GM23248 (cell line): ENCODE measurements at regions of chr5 and their contacts with region 1.

Region 1: DNA sequence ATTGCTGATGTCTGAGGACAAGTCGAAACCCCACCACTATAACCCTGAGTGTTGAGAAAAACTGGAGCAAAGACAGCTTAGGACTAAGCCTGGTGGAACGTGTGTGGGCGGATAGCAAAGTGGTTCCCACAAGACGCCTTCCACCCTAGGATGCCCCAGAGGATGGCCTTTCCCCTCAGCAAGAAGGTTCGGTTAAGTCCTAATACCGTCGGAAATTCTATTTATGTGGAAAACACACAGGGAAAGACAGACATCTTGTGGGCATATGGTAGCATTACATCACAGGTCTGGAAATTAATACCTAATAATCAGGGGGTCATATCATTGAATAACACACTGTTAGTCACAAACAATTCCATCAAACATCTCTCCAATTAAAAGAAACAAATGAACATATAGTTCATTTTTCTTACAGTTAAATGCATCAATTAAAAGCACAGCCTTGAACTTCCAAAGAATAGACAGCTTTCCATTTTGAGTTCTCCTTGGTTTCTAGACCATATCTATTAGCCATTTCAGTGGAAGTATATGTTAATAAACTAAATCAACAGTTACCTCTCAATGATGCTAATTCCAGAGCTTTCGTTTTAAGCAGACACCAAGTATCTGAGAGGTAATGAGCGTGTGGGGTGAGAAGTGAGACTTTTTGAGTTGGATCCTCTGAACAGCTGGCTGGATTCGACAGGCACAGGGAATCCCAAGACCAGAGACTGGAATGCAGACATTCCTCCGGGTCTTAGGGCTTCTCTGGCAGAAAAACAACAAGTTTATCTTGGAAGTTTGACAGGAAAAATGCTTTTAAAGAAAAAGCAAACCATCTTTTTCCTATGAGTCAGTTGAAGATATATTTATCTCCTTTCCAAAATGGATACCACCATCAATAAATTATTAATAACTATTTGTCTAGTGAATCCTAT is 2.9 kb upstream of the ICE1 start:
- DNase-seq: peak; percentile 92
- H3K4me3 ChIP-seq: peak overlapping the region; percentile 24; the same call in 1 of the 2 replicates
- H3K27ac ChIP-seq: peak overlapping the region; percentile 25; the same call in 1 of the 2 replicates
- H3K4me1 ChIP-seq: peaks cover 30% of the 10 kb centered on the region
- H3K27me3 ChIP-seq: no peaks in the 10 kb centered on the region

Region 2: DNA sequence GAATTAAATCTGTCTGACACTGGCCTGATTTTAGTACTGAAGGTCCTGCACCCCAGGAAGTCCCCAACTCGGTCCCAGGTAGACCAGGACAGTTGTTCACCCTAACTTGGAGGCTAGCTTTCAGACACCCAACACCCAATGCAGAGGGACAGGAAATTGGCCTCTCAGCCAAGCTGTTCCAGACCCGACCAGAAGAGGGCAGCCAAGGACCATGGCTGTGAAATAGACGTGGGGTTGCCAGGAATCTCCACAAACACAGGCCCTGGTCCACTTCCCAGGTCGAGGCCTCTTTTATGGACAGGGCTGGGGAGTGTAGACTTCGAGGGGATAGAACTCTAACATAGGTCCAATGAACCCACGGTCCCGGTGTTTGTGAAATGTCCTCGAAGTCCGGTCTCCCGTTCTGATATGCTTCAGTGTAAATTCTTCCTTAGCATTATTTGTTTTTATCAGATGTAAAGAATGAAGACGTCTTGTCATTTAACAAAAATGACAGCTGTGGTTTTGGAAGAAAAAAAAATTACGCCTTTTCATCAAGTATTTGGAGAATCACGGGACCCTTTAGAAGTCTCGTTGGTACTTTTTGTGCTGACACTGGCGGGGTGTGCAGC is 539.8 kb before region 1 on chr5:
- in situ Hi-C with region 1: loop called (anchors 10 kb)
- DNase-seq: peak; percentile 78
- H3K4me3 ChIP-seq: no peak overlapping the region
- H3K27ac ChIP-seq: no peak overlapping the region
- H3K4me1 ChIP-seq: no peaks in the 10 kb centered on the region
- H3K27me3 ChIP-seq: no peaks in the 10 kb centered on the region